ENCODE measurements at regions of chr1 and their contacts with region 1.

Region 1: DNA sequence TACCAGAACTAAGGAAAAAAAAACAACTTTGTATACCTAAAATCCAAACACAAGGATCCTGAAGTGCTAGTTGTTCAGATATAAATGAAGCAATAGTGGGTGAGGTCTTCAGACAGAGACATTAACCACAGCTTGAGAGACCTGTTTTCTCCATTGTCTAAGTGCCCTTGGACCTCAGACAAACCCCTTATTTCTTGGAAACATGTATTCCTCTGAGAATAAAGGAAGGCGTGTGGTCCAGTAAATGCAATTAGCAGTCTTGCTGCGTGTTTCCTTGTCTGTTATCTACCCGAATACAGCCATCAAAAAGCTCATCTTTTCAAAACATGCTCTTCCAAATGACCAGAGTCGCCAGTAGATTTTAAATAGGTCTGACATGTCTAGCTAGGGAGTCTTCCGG is 291.1 kb upstream of the NFIA start:
- DNase-seq: no peak
- H3K4me3 ChIP-seq: no peak overlapping the region
- H3K27ac ChIP-seq: no peak overlapping the region
- H3K4me1 ChIP-seq: no peaks in the 10 kb centered on the region
- H3K27me3 ChIP-seq: peaks cover 0 to under 1% of the 10 kb centered on the region in 2 experiments
- CTCF ChIP-seq: no peak
- POLR2A ChIP-seq: no peak

Region 2: GRCh38 chr1:60709426-60709825 is 81.8 kb before region 1 on chr1:
- CTCF ChIA-PET with region 1: no interaction called
- POLR2A ChIA-PET with region 1: no interaction called
- dilution Hi-C with region 1: no loop called
- intact Hi-C with region 1: no loop called
- DNase-seq: no peak
- H3K4me3 ChIP-seq: no peak overlapping the region
- H3K27ac ChIP-seq: no peak overlapping the region
- H3K4me1 ChIP-seq: no peaks in the 10 kb centered on the region
- H3K27me3 ChIP-seq: no peaks in the 10 kb centered on the region
- CTCF ChIP-seq: no peak
- POLR2A ChIP-seq: no peak

Region 3: GRCh38 chr1:60727552-60727951 is 63.7 kb before region 1 on chr1:
- CTCF ChIA-PET with region 1: no interaction called
- POLR2A ChIA-PET with region 1: no interaction called
- dilution Hi-C with region 1: no loop called
- intact Hi-C with region 1: loop called (anchors 2 kb)
- DNase-seq: no peak
- H3K4me3 ChIP-seq: no peak overlapping the region
- H3K27ac ChIP-seq: no peak overlapping the region
- H3K4me1 ChIP-seq: no peaks in the 10 kb centered on the region
- H3K27me3 ChIP-seq: no peaks in the 10 kb centered on the region
- CTCF ChIP-seq: no peak
- POLR2A ChIP-seq: no peak

Region 4: GRCh38 chr1:60866917-60867531 is 75.8 kb after region 1 on chr1:
- CTCF ChIA-PET with region 1: no interaction called
- POLR2A ChIA-PET with region 1: no interaction called
- dilution Hi-C with region 1: no loop called
- intact Hi-C with region 1: no loop called
- DNase-seq: peak; percentile 17
- H3K4me3 ChIP-seq: no peak overlapping the region
- H3K27ac ChIP-seq: no peak overlapping the region
- H3K4me1 ChIP-seq: peaks cover 12% of the 10 kb centered on the region
- H3K27me3 ChIP-seq: no peaks in the 10 kb centered on the region
- CTCF ChIP-seq: no peak
- POLR2A ChIP-seq: no peak